ENCODE measurements at regions of chr19 and their contacts with region 1.

Region 1: DNA sequence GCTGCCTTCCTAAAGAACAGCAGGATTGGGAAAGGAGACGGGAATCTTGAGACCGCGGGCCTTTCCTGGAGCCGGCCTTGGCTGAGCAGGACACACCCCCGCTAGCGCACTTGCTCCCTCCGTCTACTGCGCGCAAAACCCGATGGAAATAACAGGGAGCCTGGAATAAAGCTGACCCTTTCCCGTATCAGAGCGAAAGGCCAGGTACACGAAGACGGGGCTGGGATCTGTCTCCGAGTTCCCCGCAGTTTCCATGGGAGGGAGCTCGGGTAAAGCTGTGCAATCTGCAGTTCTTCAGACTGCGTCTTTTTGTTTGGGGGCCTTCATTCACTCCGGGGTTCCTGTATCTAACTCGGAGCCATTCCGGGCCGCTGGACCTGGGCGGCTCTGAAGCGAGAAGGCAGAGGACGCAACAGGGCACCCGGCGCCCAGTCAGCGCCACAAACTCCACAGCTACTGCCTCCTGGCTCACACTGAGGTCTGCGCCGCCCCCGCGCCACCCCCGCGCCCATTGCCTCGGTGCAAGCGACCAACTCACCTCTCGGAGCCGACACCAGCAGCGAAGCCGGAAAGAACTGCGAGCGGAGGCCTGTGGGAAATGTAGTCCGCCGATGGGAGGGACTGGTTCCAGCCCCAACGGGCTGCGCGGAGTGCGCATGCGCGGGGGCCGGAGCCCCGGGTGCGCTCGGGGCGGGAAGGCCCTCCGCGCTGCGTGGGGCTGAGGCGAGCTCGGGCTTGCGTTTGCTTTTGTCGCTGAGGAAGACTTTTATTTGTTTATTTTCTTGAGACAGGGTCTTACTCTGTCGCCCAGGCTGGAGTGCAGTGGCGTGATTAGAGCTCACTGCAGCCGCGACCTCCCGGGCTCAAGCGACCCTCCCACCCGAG is at the start of gene ZFP14:
- DNase-seq: peak; percentile 98 to 100
- ATAC-seq: peak; percentile 99
- H3K4me3 ChIP-seq: peak within 1 kb of the TSS; percentile 61
- H3K27ac ChIP-seq: peak within 1 kb of the TSS; percentile 73 to 85
- H3K4me1 ChIP-seq: peaks cover 5% of the 10 kb centered on the region; the same call in 2 of the 3 replicates
- CTCF ChIP-seq: peak; percentile 34
- EP300 ChIP-seq: no peak
- POLR2A ChIP-seq: peak; percentile 80
- RAD21 ChIP-seq: peak; percentile 61 to 71
- polyA plus RNA-seq, gene ZFP14: 5.8 and 7.1 TPM in 2 replicates

Region 2: DNA sequence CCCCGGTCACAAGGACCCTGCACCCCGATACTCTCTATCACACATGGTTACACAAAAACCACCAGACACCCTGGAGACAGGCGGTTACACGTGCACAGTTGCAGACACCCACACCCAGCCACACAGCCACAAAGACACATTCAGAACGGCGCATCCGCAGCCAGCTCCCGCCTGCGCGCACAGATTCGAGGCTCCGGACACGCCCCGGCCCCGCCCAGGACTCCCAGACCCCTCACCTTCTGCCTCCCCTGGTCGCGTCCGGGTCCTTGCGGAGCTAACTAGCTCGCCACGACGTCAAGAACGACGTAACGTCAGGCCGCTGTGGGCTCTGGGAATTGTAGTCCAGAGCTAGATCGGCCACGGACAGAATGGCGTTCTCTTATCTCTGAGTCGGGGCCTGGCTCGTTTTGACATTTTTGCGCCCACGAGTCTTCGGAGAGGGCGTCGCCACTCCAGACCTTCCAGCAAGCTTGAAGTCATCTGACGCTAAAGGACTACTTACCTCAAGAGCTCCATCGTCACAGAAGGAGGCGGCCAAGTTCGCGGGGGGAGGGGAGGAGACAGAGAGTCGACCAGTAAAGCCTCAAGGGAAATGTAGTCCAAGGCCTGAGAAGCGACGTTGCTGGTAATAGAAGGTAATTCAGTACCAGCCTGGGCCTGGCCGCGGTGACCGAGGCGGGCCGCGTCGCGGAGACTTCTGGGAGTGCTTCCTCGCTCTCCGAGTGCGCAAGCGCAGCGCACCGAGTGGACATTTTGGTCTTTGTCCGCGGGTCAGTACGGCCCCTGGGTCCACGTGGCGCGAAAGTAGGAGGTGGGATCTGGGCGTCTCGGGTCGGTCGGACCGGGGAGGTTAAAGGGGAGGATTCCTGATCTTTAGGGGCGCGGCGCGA is 164.2 kb before region 1 on chr19 and contains the starts of genes ZNF146 and ZNF565:
- CTCF ChIA-PET with region 1: no interaction called
- POLR2A ChIA-PET with region 1: interaction called, 11 read pairs
- DNase-seq: peak; percentile 100
- ATAC-seq: peak; percentile 95 to 96
- H3K4me3 ChIP-seq: peak within 1 kb of the TSS; percentile 63
- H3K27ac ChIP-seq: peak within 1 kb of the TSS; percentile 87 to 91
- H3K4me1 ChIP-seq: 0 out of 3 replicates have a peak, but pooled peaks cover 3% of the 10 kb centered on the region
- CTCF ChIP-seq: no peak
- EP300 ChIP-seq: no peak
- POLR2A ChIP-seq: peak; percentile 97
- RAD21 ChIP-seq: no peak
- polyA plus RNA-seq, gene ZNF146: 293 and 362 TPM in 2 replicates
- polyA plus RNA-seq, gene ZNF565: 5.6 and 6.8 TPM in 2 replicates

Region 3: DNA sequence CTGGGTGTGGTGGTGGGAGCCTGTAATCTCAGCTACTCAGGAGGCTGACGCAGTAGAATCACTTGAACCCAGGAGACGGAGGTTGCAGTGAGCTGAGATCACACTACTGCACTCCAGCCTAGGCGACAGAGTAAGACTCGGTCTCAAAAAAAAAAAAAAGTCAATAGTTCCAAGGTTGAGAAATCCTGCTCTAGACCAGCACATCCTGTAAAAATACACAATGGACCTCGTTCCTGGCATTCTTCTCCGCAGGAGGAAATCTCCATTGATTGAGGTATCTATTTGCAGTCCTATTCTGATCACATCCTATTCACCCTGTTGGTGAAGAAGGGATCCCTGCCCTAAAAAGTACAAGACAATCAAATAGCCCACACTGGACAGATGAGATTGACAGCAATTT is 15.0 kb before region 1 on chr19:
- CTCF ChIA-PET with region 1: interaction called, 14 read pairs
- POLR2A ChIA-PET with region 1: interaction called, 4 read pairs
- DNase-seq: no peak
- ATAC-seq: no peak
- H3K4me3 ChIP-seq: no peak overlapping the region
- H3K27ac ChIP-seq: no peak overlapping the region
- H3K4me1 ChIP-seq: no peaks in the 10 kb centered on the region
- CTCF ChIP-seq: no peak
- EP300 ChIP-seq: no peak
- POLR2A ChIP-seq: no peak
- RAD21 ChIP-seq: no peak

Region 4: GRCh38 chr19:36528194-36528920 is 149.5 kb after region 1 on chr19 and contains the start of gene ZNF260:
- CTCF ChIA-PET with region 1: interaction called, 3 read pairs
- POLR2A ChIA-PET with region 1: interaction called, 19 read pairs
- DNase-seq: peak; percentile 97 to 99
- ATAC-seq: peak; percentile 96 to 97
- H3K4me3 ChIP-seq: peak within 1 kb of the TSS; percentile 62
- H3K27ac ChIP-seq: peak within 1 kb of the TSS; percentile 84 to 87
- H3K4me1 ChIP-seq: no peaks in the 10 kb centered on the region
- CTCF ChIP-seq: no peak
- EP300 ChIP-seq: no peak
- POLR2A ChIP-seq: peak; percentile 86
- RAD21 ChIP-seq: no peak
- polyA plus RNA-seq, gene ZNF260: 19.3 and 25.6 TPM in 2 replicates